ENCODE measurements at regions of chr12 and their contacts with region 1.

Region 1: GRCh38 chr12:89524541-89525285 is at the start of gene GALNT4:
- DNase-seq: peak; percentile 91
- ATAC-seq: peak; percentile 76
- H3K4me3 ChIP-seq: peak within 1 kb of the TSS; percentile 72 to 98 (median 85)
- H3K4me3 Mint-ChIP-seq: peak within 1 kb of the TSS; percentile 96
- H3K27ac ChIP-seq: peak within 1 kb of the TSS; percentile 90 to 91
- H3K27ac Mint-ChIP-seq: peak within 1 kb of the TSS; percentile 93
- H3K4me1 ChIP-seq: peaks cover 32 to 40% of the 10 kb centered on the region in 2 donors
- H3K4me1 Mint-ChIP-seq: peaks cover 62% of the 10 kb centered on the region
- H3K27me3 ChIP-seq: no peaks in the 10 kb centered on the region
- H3K27me3 Mint-ChIP-seq: no peaks in the 10 kb centered on the region
- CTCF ChIP-seq: peak; percentile 73
- total RNA-seq, gene GALNT4: 8.3 and 10.3 TPM in 2 replicates

Region 2: DNA sequence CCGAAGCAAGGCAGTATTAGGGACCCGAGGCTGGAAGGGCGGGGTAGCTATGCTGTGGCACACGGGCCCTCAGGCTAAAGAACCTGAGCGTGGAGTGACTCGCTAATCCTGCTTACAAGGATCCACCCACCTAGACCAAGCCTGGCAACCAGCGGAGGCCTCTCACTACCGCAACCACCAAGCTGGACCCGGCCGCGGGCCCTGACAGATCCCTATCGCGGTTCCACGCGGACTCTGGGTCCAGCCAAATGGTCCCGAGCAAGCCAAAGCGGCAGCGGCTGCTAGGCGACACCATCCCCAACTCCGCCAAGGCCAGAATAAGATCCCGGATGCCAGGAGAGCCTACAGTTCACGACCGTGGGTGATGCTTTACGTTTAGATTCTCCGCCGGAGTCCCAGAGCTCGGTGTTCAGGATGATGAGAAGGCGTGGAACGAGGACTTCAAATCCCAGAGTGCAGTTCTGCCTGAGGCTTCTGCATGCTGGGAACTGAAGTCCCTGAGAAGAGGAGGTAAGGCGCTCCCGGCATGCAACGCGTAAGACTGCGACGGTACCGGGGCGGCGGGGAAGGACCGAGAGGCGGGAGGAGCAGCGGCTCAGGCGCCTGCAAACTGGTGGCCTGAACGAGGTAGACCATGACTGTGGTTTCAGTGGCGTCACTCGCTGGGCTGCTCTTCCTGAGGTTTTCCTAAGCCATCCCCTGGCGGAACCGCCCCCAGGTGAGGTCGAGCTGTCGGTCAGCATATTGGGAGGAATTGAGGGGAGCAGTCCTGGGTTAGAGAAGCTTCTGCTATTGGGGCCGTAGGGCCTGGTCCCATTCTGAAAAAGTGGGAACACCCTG is 1382.7 kb before region 1 on chr12 and contains the starts of genes CEP290 and TMTC3:
- CTCF ChIA-PET with region 1: interaction called, 3 read pairs
- POLR2A ChIA-PET with region 1: interaction called, 5 read pairs
- intact Hi-C with region 1: loop called (anchors 2 kb)
- DNase-seq: peak; percentile 96
- ATAC-seq: peak; percentile 93
- H3K4me3 ChIP-seq: peak within 1 kb of the TSS; percentile 74 to 95 (median 82)
- H3K4me3 Mint-ChIP-seq: peak within 1 kb of the TSS; percentile 92
- H3K27ac ChIP-seq: peak within 1 kb of the TSS; percentile 74 to 79
- H3K27ac Mint-ChIP-seq: peak within 1 kb of the TSS; percentile 92
- H3K4me1 ChIP-seq: peaks cover 12% of the 10 kb centered on the region in 2 donors
- H3K4me1 Mint-ChIP-seq: peaks cover 27% of the 10 kb centered on the region
- H3K27me3 ChIP-seq: no peaks in the 10 kb centered on the region
- H3K27me3 Mint-ChIP-seq: no peaks in the 10 kb centered on the region
- CTCF ChIP-seq: no peak
- total RNA-seq, gene CEP290: 27.3 and 31.0 TPM in 2 replicates
- total RNA-seq, gene TMTC3: 8.9 and 10.1 TPM in 2 replicates

Region 3: GRCh38 chr12:89166525-89166934 is 358.2 kb before region 1 on chr12:
- CTCF ChIA-PET with region 1: no interaction called
- POLR2A ChIA-PET with region 1: no interaction called
- intact Hi-C with region 1: loop called (anchors 2 kb)
- DNase-seq: peak; percentile 93
- ATAC-seq: peak; percentile 83
- H3K4me3 ChIP-seq: peak overlapping the region in 1 of 5 experiments; percentile 21
- H3K4me3 Mint-ChIP-seq: peak overlapping the region; percentile 67
- H3K27ac ChIP-seq: peak overlapping the region; percentile 90 to 98
- H3K27ac Mint-ChIP-seq: peak overlapping the region; percentile 90
- H3K4me1 ChIP-seq: peaks cover 56 to 63% of the 10 kb centered on the region in 2 donors
- H3K4me1 Mint-ChIP-seq: peaks cover 31% of the 10 kb centered on the region
- H3K27me3 ChIP-seq: no peaks in the 10 kb centered on the region
- H3K27me3 Mint-ChIP-seq: no peaks in the 10 kb centered on the region
- CTCF ChIP-seq: no peak

Region 4: DNA sequence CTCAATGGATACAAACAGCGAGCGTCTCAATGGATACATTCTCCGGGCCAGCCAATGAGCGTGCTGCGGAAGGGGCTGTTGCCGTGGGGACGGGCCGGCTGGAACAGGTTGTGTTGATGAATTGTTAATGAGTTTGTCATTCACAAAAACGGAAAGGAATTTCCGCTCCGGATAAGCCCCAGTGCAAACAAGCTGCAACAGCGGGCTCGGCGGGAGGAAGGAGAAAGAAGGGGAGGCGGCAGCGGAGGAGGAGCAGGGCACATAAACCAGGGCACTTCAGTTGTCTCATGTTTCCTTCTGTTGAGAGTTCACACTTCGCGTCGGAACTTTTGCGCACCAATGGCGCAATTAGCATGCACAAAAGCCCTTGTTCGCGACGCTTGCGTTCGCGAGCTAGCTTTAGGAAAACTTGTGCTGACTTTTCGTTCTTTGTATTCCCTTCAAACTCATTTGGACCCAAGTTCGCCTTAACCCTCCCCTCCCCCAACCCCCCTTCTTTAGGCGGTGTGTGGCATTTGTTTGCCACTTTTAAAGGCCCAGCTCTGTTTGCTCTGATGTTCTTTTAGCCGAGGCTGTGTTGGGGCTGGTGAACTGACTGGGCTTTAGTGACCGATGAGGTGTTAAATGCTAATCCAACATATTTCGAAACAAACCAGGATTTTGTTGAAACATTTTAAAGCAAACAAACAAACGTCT is 172.1 kb before region 1 on chr12 and contains the start of gene DUSP6:
- CTCF ChIA-PET with region 1: interaction called, 21 read pairs
- POLR2A ChIA-PET with region 1: interaction called, 4 read pairs
- intact Hi-C with region 1: loop called (anchors 1 kb)
- DNase-seq: peak; percentile 88
- ATAC-seq: peak; percentile 64
- H3K4me3 ChIP-seq: peak within 1 kb of the TSS; percentile 63 to 94 (median 78)
- H3K4me3 Mint-ChIP-seq: peak within 1 kb of the TSS; percentile 97
- H3K27ac ChIP-seq: peak within 1 kb of the TSS; percentile 82 to 87
- H3K27ac Mint-ChIP-seq: peak within 1 kb of the TSS; percentile 96
- H3K4me1 ChIP-seq: peaks cover 44 to 52% of the 10 kb centered on the region in 2 donors
- H3K4me1 Mint-ChIP-seq: peaks cover 68% of the 10 kb centered on the region
- H3K27me3 ChIP-seq: no peaks in the 10 kb centered on the region
- H3K27me3 Mint-ChIP-seq: no peaks in the 10 kb centered on the region
- CTCF ChIP-seq: no peak
- total RNA-seq, gene DUSP6: 1.6 and 3.2 TPM in 2 replicates

Region 5: GRCh38 chr12:89470741-89471509 is 53.8 kb before region 1 on chr12:
- CTCF ChIA-PET with region 1: interaction called, 181 read pairs
- POLR2A ChIA-PET with region 1: no interaction called
- intact Hi-C with region 1: loop called (anchors 1 kb)
- DNase-seq: peak; percentile 70
- ATAC-seq: peak; percentile 61
- H3K4me3 ChIP-seq: no peak overlapping the region
- H3K4me3 Mint-ChIP-seq: no peak overlapping the region
- H3K27ac ChIP-seq: no peak overlapping the region
- H3K27ac Mint-ChIP-seq: peak overlapping the region; percentile 63
- H3K4me1 ChIP-seq: peaks cover 22 to 32% of the 10 kb centered on the region in 2 donors
- H3K4me1 Mint-ChIP-seq: peaks cover 47% of the 10 kb centered on the region
- H3K27me3 ChIP-seq: no peaks in the 10 kb centered on the region
- H3K27me3 Mint-ChIP-seq: no peaks in the 10 kb centered on the region
- CTCF ChIP-seq: peak; percentile 82

Measured in B cell (primary cell).